ENCODE measurements at regions of chr11 and their contacts with region 1.

Region 1: GRCh38 chr11:95345651-95346050 is 114.6 kb upstream of the SESN3 start:
- DNase-seq: no peak
- H3K4me3 Mint-ChIP-seq: no peak overlapping the region
- H3K27ac Mint-ChIP-seq: no peak overlapping the region
- H3K4me1 Mint-ChIP-seq: peaks cover 23% of the 10 kb centered on the region
- H3K27me3 Mint-ChIP-seq: peaks cover 24% of the 10 kb centered on the region

Region 2: DNA sequence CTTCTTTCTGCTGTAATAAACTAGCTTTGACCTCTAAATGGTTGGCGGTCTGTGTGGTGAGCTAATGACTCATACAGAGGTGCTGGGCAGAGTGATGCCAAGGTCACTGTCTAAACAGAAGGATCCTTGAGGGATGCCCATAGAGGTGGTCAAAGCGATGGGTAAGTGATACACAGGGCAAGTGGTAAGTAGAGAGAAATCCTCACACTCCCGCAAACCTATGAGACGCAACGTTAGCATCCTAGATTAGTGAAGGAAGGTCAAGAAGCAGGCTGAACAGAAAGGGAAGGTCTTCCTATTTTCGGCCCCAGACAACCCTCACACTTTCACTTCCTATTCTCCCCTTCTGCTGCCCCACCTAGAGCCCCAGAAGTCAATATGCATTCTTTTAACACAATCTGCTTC is 49.0 kb before region 1 on chr11:
- intact Hi-C with region 1: loop called (anchors 2 kb)
- DNase-seq: no peak
- H3K4me3 Mint-ChIP-seq: no peak overlapping the region
- H3K27ac Mint-ChIP-seq: no peak overlapping the region
- H3K4me1 Mint-ChIP-seq: peaks cover 24% of the 10 kb centered on the region
- H3K27me3 Mint-ChIP-seq: no peaks in the 10 kb centered on the region

Region 3: GRCh38 chr11:95364324-95365295 is 19.0 kb after region 1 on chr11:
- intact Hi-C with region 1: no loop called
- DNase-seq: no peak
- H3K4me3 Mint-ChIP-seq: no peak overlapping the region
- H3K27ac Mint-ChIP-seq: no peak overlapping the region
- H3K4me1 Mint-ChIP-seq: no peaks in the 10 kb centered on the region
- H3K27me3 Mint-ChIP-seq: no peaks in the 10 kb centered on the region

Region 4: DNA sequence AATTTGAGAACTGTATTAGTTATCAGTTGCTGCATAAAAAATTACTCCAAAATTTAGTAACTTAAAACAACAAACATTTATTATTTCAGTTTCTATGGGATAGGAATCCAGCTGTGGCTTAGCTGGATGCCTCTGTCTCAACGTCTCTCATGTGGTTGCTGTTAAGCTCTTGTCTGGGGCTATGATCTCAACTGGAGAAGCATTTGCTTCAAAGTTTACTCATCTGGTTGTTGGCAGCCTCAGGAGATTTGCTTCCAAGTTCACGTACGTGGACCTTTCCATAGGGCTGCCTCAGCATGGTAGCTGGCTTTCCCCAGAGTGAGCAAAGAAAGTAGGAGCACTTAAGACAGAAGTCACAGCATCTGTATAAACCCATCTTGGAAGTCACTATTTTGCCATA is 30.2 kb after region 1 on chr11:
- intact Hi-C with region 1: no loop called
- DNase-seq: no peak
- H3K4me3 Mint-ChIP-seq: no peak overlapping the region
- H3K27ac Mint-ChIP-seq: no peak overlapping the region
- H3K4me1 Mint-ChIP-seq: no peaks in the 10 kb centered on the region
- H3K27me3 Mint-ChIP-seq: peaks cover 9% of the 10 kb centered on the region

Region 5: DNA sequence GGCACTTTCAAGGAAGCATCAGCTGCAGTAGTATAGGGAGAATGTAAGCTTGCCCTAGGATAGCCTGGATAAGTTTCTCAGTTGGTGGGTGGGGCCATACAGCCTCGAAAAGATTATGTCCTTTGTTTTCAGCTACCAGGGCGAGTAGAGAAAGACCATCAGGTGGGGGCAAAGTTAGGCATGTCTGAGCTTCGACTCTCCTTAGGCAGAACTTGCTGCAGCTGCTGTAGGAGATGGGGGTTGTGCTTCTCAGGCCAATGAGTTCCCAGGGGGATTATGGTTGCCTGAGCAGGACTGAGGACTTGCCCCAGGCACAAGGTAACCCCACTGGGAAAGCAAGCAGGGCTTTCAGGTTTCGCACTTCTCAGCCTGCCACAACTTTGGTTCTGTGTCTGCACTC is 58.7 kb after region 1 on chr11:
- intact Hi-C with region 1: no loop called
- DNase-seq: no peak
- H3K4me3 Mint-ChIP-seq: no peak overlapping the region
- H3K27ac Mint-ChIP-seq: no peak overlapping the region
- H3K4me1 Mint-ChIP-seq: no peaks in the 10 kb centered on the region
- H3K27me3 Mint-ChIP-seq: peaks cover 5% of the 10 kb centered on the region

Region 6: GRCh38 chr11:95680169-95680929 is 334.7 kb after region 1 on chr11:
- intact Hi-C with region 1: loop called (anchors 5 kb)
- DNase-seq: no peak
- H3K4me3 Mint-ChIP-seq: no peak overlapping the region
- H3K27ac Mint-ChIP-seq: peak overlapping the region; percentile 56
- H3K4me1 Mint-ChIP-seq: peaks cover 90% of the 10 kb centered on the region
- H3K27me3 Mint-ChIP-seq: no peaks in the 10 kb centered on the region

Region 7: DNA sequence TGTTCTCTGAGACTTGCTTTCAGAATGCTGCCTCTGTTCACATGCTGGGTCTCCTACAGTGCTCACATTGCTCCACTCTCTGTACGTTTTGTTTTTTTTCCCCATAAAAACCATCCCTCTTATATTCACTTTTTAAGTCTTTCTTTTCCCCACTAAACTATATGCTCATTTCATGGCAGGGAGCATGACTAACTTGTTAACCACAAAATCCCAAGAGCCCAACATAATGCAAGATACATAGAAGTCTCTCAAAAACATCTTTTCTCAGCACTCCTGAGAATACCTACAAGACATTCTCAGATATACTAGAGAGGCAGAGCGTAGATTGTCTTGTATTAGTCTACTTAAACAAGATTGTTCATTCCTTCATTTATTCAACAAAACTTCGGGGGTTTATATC is 370.6 kb after region 1 on chr11:
- intact Hi-C with region 1: no loop called
- DNase-seq: no peak
- H3K4me3 Mint-ChIP-seq: peak overlapping the region; percentile 31
- H3K27ac Mint-ChIP-seq: peak overlapping the region; percentile 82
- H3K4me1 Mint-ChIP-seq: peaks cover 59% of the 10 kb centered on the region
- H3K27me3 Mint-ChIP-seq: peaks cover 3% of the 10 kb centered on the region

Measured in activated T-helper 1 cell treated with anti-CD3 and anti-CD28 coated beads, Interleukin-12 subunit alpha, Interleukin-12 subunit beta, Interleukin-2, Interleukin-4 antibody, amounts not matched to agents 30 ng/mL and 10 ng/mL and 1 ng/mL, durations not matched to agents 14 hours and 24 hours and 36 hours (primary cell).